ENCODE measurements at regions of chr9 and their contacts with region 1.

Region 1: GRCh38 chr9:114906908-114907571 is 23.4 kb downstream of the TNFSF8 start:
- DNase-seq: peak; percentile 48
- ATAC-seq: no peak
- H3K4me3 ChIP-seq: no peak overlapping the region
- H3K4me3 Mint-ChIP-seq: no peak overlapping the region
- H3K27ac ChIP-seq: no peak overlapping the region
- H3K27ac Mint-ChIP-seq: peak overlapping the region; percentile 32
- H3K4me1 ChIP-seq: peaks cover 42 to 54% of the 10 kb centered on the region in 2 donors
- H3K4me1 Mint-ChIP-seq: peaks cover 59% of the 10 kb centered on the region
- H3K27me3 ChIP-seq: no peaks in the 10 kb centered on the region
- H3K27me3 Mint-ChIP-seq: no peaks in the 10 kb centered on the region
- CTCF ChIP-seq: peak; percentile 50

Region 2: DNA sequence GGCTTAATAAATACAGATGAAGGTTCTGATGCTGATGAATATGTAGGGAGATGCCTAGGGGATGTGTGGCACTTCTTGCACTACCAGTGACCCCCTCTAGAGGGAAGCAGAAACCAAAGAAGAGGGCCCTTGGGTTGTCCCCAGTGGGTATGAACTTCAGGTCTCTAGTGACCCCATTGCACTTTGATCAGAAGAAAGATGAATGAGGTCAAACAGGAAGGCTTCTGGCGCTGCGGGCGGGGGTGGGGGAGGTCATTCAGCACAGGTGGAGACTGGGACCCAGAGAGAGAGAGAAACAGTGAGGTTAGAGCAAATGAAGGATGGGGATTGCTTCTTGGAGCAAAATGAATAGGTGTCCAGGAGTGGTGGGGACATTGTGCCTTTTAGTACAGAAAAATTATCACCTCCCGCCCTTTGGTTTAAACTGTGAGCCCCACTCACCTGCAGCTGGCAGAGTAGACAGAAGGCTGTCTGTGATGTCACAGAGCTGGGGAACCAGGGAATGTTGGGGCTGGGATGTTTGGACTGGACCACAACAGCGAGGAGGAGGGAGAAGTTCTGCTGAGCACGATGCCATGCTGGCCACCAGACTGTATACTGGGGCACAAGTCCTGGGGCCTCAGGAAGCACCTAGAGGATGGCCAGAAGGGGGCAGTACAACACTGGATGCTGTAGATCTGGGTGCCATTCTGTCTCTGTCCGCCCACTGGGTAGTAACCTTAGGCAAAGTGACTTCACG is 225.3 kb before region 1 on chr9 and contains the start of gene TEX48:
- CTCF ChIA-PET with region 1: interaction called, 24 read pairs
- POLR2A ChIA-PET with region 1: no interaction called
- intact Hi-C with region 1: loop called (anchors 1 kb)
- DNase-seq: peak; percentile 75
- ATAC-seq: peak; percentile 89
- H3K4me3 ChIP-seq: no peak within 1 kb of the TSS
- H3K4me3 Mint-ChIP-seq: no peak within 1 kb of the TSS
- H3K27ac ChIP-seq: no peak within 1 kb of the TSS
- H3K27ac Mint-ChIP-seq: no peak within 1 kb of the TSS
- H3K4me1 ChIP-seq: peaks cover 0 to 4% of the 10 kb centered on the region in 2 donors
- H3K4me1 Mint-ChIP-seq: peaks cover 2% of the 10 kb centered on the region
- H3K27me3 ChIP-seq: peaks cover 0 to 15% (median 8%) of the 10 kb centered on the region in 4 experiments
- H3K27me3 Mint-ChIP-seq: peaks cover 39% of the 10 kb centered on the region
- CTCF ChIP-seq: peak; percentile 77
- total RNA-seq, gene TEX48: not detected in 2 replicates

Region 3: GRCh38 chr9:114738581-114739316 is 168.3 kb before region 1 on chr9:
- CTCF ChIA-PET with region 1: interaction called, 122 read pairs
- POLR2A ChIA-PET with region 1: no interaction called
- intact Hi-C with region 1: loop called (anchors 1 kb)
- DNase-seq: peak; percentile 88
- ATAC-seq: peak; percentile 92
- H3K4me3 ChIP-seq: no peak overlapping the region
- H3K4me3 Mint-ChIP-seq: no peak overlapping the region
- H3K27ac ChIP-seq: no peak overlapping the region
- H3K27ac Mint-ChIP-seq: no peak overlapping the region
- H3K4me1 ChIP-seq: peaks cover 7 to 8% of the 10 kb centered on the region in 2 donors
- H3K4me1 Mint-ChIP-seq: peaks cover 13% of the 10 kb centered on the region
- H3K27me3 ChIP-seq: peaks cover 0 to 3% (median 1%) of the 10 kb centered on the region in 4 experiments
- H3K27me3 Mint-ChIP-seq: peaks cover 5% of the 10 kb centered on the region
- CTCF ChIP-seq: peak; percentile 91

Region 4: DNA sequence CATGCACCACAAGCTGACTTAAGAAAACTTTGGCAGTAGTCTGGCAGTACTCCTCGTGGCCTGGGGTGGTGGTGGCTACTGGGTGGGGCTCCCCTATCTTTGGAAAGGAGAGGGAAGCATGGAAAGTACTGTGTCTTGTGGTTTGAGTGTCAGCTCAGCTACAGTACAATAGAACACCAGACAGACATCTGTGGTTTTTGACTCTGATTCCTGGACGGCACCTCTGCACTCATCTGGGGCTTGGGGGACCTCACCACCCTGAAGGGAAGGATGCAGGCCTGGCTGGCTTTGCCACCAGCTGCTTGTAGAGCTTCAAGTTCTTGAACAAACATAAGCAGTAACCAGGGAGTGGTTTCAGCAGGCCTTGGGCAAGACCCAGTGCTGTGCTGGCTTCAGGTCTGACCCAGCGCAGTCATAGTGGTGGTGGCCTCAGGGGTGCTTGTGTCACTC is 17.2 kb before region 1 on chr9:
- CTCF ChIA-PET with region 1: interaction called, 11 read pairs
- POLR2A ChIA-PET with region 1: no interaction called
- intact Hi-C with region 1: no loop called
- DNase-seq: peak; percentile 51
- ATAC-seq: peak; percentile 60
- H3K4me3 ChIP-seq: no peak overlapping the region
- H3K4me3 Mint-ChIP-seq: peak overlapping the region; percentile 17
- H3K27ac ChIP-seq: peak overlapping the region in 1 of 2 donors; percentile 46
- H3K27ac Mint-ChIP-seq: peak overlapping the region; percentile 86
- H3K4me1 ChIP-seq: peaks cover 38 to 41% of the 10 kb centered on the region in 2 donors
- H3K4me1 Mint-ChIP-seq: peaks cover 51% of the 10 kb centered on the region
- H3K27me3 ChIP-seq: no peaks in the 10 kb centered on the region
- H3K27me3 Mint-ChIP-seq: no peaks in the 10 kb centered on the region
- CTCF ChIP-seq: no peak

Region 5: DNA sequence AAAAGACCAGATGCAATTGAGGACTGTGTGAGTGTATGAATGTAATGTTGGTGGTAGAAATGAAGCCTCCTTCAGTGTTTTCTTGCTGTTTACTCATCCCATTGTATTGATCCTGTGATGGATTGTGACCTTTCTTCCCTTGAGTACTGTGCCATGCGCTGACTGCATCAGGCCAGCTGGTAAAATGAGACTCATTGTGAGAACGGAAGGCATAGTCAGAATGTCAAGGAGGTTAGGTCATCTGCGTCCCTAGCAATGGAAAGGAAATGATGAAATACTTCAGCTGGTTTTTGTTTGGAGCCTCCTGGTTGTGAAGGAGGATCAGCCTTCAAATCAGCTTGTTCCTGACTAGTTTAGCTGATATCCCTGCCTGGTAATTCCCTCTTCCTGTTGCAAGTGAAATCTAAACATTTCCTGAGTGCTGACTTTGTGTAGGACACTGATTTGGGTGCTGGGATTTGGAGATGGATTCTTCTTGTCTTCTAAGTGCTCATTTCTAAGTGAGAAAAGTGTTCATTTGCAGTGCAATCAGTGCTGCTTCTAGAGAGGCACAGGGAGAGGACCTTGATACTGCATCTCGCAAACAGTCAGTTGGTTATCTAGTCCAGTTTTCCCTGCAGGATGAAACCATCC is 12.1 kb before region 1 on chr9:
- CTCF ChIA-PET with region 1: interaction called, 13 read pairs
- POLR2A ChIA-PET with region 1: no interaction called
- intact Hi-C with region 1: no loop called
- DNase-seq: no peak
- ATAC-seq: no peak
- H3K4me3 ChIP-seq: no peak overlapping the region
- H3K4me3 Mint-ChIP-seq: peak overlapping the region; percentile 32
- H3K27ac ChIP-seq: no peak overlapping the region
- H3K27ac Mint-ChIP-seq: peak overlapping the region; percentile 78
- H3K4me1 ChIP-seq: peaks cover 65 to 68% of the 10 kb centered on the region in 2 donors
- H3K4me1 Mint-ChIP-seq: peaks cover 48% of the 10 kb centered on the region
- H3K27me3 ChIP-seq: no peaks in the 10 kb centered on the region
- H3K27me3 Mint-ChIP-seq: no peaks in the 10 kb centered on the region
- CTCF ChIP-seq: no peak

Region 6: GRCh38 chr9:114930056-114930812 is 23.2 kb after region 1 on chr9 and contains the start of gene TNFSF8:
- CTCF ChIA-PET with region 1: interaction called, 10 read pairs
- POLR2A ChIA-PET with region 1: no interaction called
- intact Hi-C with region 1: no loop called
- DNase-seq: peak; percentile 82
- ATAC-seq: peak; percentile 67
- H3K4me3 ChIP-seq: peak within 1 kb of the TSS; percentile 47 to 94 (median 69)
- H3K4me3 Mint-ChIP-seq: peak within 1 kb of the TSS; percentile 83
- H3K27ac ChIP-seq: peak within 1 kb of the TSS; percentile 68 to 77
- H3K27ac Mint-ChIP-seq: peak within 1 kb of the TSS; percentile 84
- H3K4me1 ChIP-seq: peaks cover 37 to 38% of the 10 kb centered on the region in 2 donors
- H3K4me1 Mint-ChIP-seq: peaks cover 43% of the 10 kb centered on the region
- H3K27me3 ChIP-seq: peaks cover 0 to 2% (median under 1%) of the 10 kb centered on the region in 4 experiments
- H3K27me3 Mint-ChIP-seq: peaks cover 15% of the 10 kb centered on the region
- CTCF ChIP-seq: no peak
- total RNA-seq, gene TNFSF8: 1.6 and 1.9 TPM in 2 replicates

Region 7: DNA sequence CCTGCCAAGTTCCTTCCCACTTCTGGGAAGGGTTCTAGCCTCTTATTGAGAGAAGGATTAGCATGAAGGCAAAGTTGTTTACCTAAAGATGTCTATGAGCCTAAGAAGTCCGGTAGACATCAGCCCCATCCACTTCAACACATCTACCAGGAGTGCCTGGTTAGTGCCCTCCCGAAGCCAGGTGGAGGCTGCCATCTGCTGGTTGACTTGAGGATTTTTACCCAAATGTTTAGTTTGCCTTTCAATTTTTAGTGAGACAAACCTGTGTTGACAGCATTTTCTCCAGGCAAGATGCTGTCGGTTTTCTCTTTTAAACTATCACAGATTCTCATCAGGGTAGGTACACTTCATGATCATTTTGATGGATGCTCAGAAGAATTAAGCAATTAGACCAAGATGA is 107.0 kb after region 1 on chr9:
- CTCF ChIA-PET with region 1: interaction called, 14 read pairs
- POLR2A ChIA-PET with region 1: no interaction called
- intact Hi-C with region 1: loop called (anchors 1 kb)
- DNase-seq: peak; percentile 81
- ATAC-seq: peak; percentile 65
- H3K4me3 ChIP-seq: no peak overlapping the region
- H3K4me3 Mint-ChIP-seq: no peak overlapping the region
- H3K27ac ChIP-seq: no peak overlapping the region
- H3K27ac Mint-ChIP-seq: no peak overlapping the region
- H3K4me1 ChIP-seq: no peaks in the 10 kb centered on the region
- H3K4me1 Mint-ChIP-seq: peaks cover 3% of the 10 kb centered on the region
- H3K27me3 ChIP-seq: no peaks in the 10 kb centered on the region
- H3K27me3 Mint-ChIP-seq: peaks cover 24% of the 10 kb centered on the region
- CTCF ChIP-seq: peak; percentile 91